ENCODE measurements at regions of chr15 and their contacts with region 1.

Region 1: DNA sequence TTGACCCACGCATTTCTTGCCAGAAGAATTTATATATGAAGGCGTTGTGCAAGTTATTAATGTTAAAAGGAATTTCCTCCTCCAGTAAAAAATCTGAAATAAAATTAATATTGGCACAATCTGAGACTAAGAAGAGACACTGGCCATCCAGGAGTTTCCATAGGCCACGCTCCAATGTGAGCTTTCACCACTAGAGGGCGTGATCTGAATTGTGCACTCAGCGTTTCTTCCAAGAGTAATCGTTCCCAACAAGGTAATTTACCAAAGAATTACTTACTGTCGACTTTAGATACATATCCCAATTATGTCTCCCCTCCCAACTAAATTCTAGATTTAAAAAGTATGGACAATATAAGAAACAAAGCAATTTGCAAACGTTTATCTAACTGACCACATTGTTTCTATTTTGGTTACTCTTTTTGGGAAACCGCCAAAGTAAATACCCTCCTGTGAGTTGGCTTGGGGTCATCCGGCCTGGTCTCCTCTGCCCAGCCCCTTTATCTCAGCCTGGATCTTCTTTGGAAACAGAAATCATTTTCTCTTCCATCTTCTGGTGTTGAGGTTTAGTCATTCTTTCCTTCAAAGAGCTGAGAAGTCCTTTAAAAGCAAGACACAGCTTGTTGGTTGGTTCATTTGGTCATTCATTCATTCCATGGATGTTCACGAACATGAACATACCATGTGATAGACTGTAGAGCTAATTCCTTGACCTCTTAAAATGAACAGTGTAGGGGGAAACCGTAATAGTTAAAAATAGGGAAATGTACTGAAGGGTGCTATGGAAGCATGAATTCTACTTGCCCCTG is 26.2 kb downstream of the POLR2M start:
- DNase-seq: peak in 1 of 2 donors; percentile 45
- ATAC-seq: peak in 6 of 8 donors; percentile 46 to 74 (median 64)
- H3K4me3 ChIP-seq: no peak overlapping the region
- H3K27ac ChIP-seq: no peak overlapping the region
- H3K4me1 ChIP-seq: peaks cover 0 to 19% (median 6%) of the 10 kb centered on the region in 9 donors
- H3K27me3 ChIP-seq: no peaks in the 10 kb centered on the region
- CTCF ChIP-seq: peak; percentile 68 to 94 (median 87)

Region 2: DNA sequence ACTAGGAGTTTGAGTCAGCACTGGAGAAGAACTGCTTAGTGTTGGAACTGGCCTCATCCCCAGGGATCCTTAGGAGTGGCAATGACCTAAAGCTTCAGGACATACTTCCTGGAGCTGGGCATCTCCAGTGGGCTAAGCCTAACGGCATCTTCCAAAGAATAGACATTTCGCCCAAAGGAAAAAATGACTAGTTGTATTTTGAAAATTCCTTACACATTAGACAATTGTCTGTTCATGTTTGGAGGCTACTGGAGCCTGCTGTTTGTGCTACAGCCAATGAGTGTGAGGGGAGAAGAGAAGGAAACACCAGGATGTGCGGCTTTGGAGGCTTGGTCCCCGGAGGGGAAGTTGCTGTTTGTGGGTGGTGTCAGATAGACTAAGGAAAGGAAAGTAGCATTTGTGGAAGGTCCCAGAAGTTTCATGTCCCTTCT is 51.4 kb after region 1 on chr15:
- intact Hi-C with region 1: no loop called
- DNase-seq: peak; percentile 25 to 62
- ATAC-seq: peak; percentile 73 to 95 (median 92)
- H3K4me3 ChIP-seq: peak overlapping the region in 1 of 10 donors; percentile 3
- H3K27ac ChIP-seq: peak overlapping the region in 9 of 10 donors; percentile 28 to 79 (median 68)
- H3K4me1 ChIP-seq: peaks cover 5 to 29% (median 19%) of the 10 kb centered on the region in 9 donors
- H3K27me3 ChIP-seq: no peaks in the 10 kb centered on the region
- CTCF ChIP-seq: no peak

Region 3: DNA sequence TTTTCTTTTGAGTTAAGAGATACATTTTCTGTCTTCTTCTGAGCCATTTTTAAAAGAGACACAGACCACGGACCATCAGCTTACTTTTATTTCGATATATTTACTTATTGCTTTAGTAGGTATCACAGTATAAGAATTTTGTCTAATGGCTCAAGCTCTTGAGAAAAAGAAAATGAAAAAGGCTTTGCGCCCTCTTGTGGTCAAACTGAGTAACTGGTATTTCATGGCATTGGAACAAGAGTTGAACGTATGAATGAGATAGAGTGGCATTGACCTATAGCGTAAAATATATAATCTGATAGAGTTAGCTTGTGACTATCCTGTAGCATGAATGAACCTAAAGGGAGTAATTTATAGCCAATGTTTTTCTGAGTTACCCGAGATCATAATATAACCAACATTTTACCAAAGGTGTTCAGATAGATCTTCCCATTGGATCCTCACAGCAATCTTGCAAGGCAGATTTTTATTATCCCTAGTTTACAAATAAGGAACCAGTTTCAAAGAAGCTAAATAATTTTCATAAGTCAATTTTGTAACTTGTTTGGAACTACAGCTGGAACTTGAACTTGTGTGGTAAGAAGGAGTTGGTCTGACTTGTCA is 128.4 kb after region 1 on chr15:
- intact Hi-C with region 1: loop called in 2 of 10 experiments (anchors 5 kb)
- DNase-seq: peak in 1 of 2 donors; percentile 36
- ATAC-seq: peak in 6 of 8 donors; percentile 31 to 57 (median 48)
- H3K4me3 ChIP-seq: no peak overlapping the region
- H3K27ac ChIP-seq: no peak overlapping the region
- H3K4me1 ChIP-seq: peaks cover 0 to 9% (median 6%) of the 10 kb centered on the region in 9 donors
- H3K27me3 ChIP-seq: no peaks in the 10 kb centered on the region
- CTCF ChIP-seq: peak; percentile 76 to 91 (median 85)